CD8-positive, alpha-beta T cell (primary cell): ENCODE measurements at regions of chr3 and their contacts with region 1.

Region 1: GRCh38 chr3:49786241-49786958 is at the start of gene IP6K1:
- DNase-seq: peak; percentile 98 to 100 (median 99)
- ATAC-seq: peak; percentile 98
- H3K4me3 ChIP-seq: peak within 1 kb of the TSS; percentile 86 to 87
- H3K4me3 Mint-ChIP-seq: peak within 1 kb of the TSS; percentile 95
- H3K27ac ChIP-seq: peak within 1 kb of the TSS; percentile 87 to 94
- H3K27ac Mint-ChIP-seq: peak within 1 kb of the TSS; percentile 99
- H3K4me1 ChIP-seq: peaks cover 29% of the 10 kb centered on the region
- H3K4me1 Mint-ChIP-seq: peaks cover 40% of the 10 kb centered on the region
- H3K27me3 ChIP-seq: no peaks in the 10 kb centered on the region
- H3K27me3 Mint-ChIP-seq: no peaks in the 10 kb centered on the region
- CTCF ChIP-seq: no peak
- total RNA-seq, gene IP6K1: 34.3 to 36.6 TPM

Region 2: DNA sequence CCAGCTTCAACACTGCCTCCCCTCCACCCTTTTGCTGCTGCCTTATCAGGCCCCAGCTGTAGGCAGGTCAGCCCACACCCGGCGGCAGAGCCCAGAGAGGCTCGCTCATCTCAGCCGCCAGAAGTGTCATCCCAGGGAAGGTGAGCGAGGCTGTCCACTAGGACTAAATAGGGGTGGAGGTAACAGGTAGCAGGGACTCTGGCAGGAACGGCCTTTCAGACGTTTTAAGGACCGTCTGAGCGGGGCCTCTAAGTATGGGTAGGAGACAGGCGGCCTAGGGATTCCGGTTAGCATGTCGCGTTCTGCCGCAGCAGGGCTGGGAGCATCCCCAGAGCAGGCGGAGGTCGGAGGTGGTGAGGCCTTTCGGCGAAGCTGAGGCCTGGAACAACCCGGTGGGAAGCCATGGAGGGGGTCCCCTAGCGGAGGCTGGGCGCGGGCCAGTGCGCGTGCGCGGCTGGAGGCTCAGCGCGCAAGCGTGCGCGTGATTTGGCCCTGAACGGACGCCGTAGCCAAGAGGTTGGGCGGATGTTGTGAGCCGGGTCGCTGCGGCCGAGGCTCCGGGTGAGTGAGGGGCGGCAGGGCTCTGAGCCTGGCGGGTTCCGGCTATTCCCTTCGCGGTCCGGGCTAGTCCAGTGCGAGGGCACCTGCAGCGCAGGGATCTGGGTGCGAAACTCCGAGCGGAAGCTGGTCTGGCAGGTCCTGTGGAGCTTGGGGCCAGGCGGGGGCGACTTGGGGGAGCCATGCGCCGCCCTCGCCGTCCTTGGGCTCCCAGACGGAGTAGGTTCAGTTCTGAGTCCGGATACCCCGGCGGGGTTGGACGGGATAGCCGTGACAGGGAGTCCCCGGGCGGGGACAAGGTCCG is 97.1 kb before region 1 on chr3 and contains the starts of genes MST1 and RNF123:
- CTCF ChIA-PET with region 1: no interaction called
- POLR2A ChIA-PET with region 1: no interaction called
- intact Hi-C with region 1: loop called in 1 of 2 experiments (anchors 5 kb)
- DNase-seq: peak; percentile 81 to 97 (median 92)
- ATAC-seq: peak; percentile 84
- H3K4me3 ChIP-seq: peak within 1 kb of the TSS; percentile 96 to 99
- H3K4me3 Mint-ChIP-seq: peak within 1 kb of the TSS; percentile 95
- H3K27ac ChIP-seq: peak within 1 kb of the TSS; percentile 73 to 78
- H3K27ac Mint-ChIP-seq: peak within 1 kb of the TSS; percentile 95
- H3K4me1 ChIP-seq: peaks cover 22% of the 10 kb centered on the region
- H3K4me1 Mint-ChIP-seq: peaks cover 45% of the 10 kb centered on the region
- H3K27me3 ChIP-seq: peaks cover 0 to 8% of the 10 kb centered on the region in 2 experiments
- H3K27me3 Mint-ChIP-seq: no peaks in the 10 kb centered on the region
- CTCF ChIP-seq: no peak
- total RNA-seq, gene MST1: 8.6 to 9.1 TPM
- total RNA-seq, gene RNF123: 23.7 to 27.0 TPM

Region 3: GRCh38 chr3:50138266-50139200 is 352.1 kb after region 1 on chr3:
- CTCF ChIA-PET with region 1: no interaction called
- POLR2A ChIA-PET with region 1: no interaction called
- intact Hi-C with region 1: no loop called
- DNase-seq: no peak
- ATAC-seq: no peak
- H3K4me3 ChIP-seq: no peak overlapping the region
- H3K4me3 Mint-ChIP-seq: no peak overlapping the region
- H3K27ac ChIP-seq: no peak overlapping the region
- H3K27ac Mint-ChIP-seq: no peak overlapping the region
- H3K4me1 ChIP-seq: peaks cover 8% of the 10 kb centered on the region
- H3K4me1 Mint-ChIP-seq: peaks cover 6% of the 10 kb centered on the region
- H3K27me3 ChIP-seq: no peaks in the 10 kb centered on the region
- H3K27me3 Mint-ChIP-seq: no peaks in the 10 kb centered on the region
- CTCF ChIP-seq: no peak